ENCODE measurements at regions of chr2 and their contacts with region 1.

Region 1: GRCh38 chr2:32009516-32010256 is 1.1 kb downstream of the MEMO1 start:
- DNase-seq: peak; percentile 50
- H3K4me3 Mint-ChIP-seq: peak overlapping the region; percentile 98
- H3K27ac Mint-ChIP-seq: peak overlapping the region; percentile 92
- H3K4me1 Mint-ChIP-seq: peaks cover 56% of the 10 kb centered on the region
- H3K27me3 Mint-ChIP-seq: no peaks in the 10 kb centered on the region

Region 2: GRCh38 chr2:31980674-31981356 is 28.9 kb before region 1 on chr2:
- CTCF ChIA-PET with region 1: no interaction called
- POLR2A ChIA-PET with region 1: no interaction called
- DNase-seq: no peak
- H3K4me3 Mint-ChIP-seq: no peak overlapping the region
- H3K27ac Mint-ChIP-seq: peak overlapping the region; percentile 26
- H3K4me1 Mint-ChIP-seq: peaks cover 21% of the 10 kb centered on the region
- H3K27me3 Mint-ChIP-seq: no peaks in the 10 kb centered on the region

Region 3: GRCh38 chr2:32427679-32428610 is 418.3 kb after region 1 on chr2:
- CTCF ChIA-PET with region 1: no interaction called
- POLR2A ChIA-PET with region 1: interaction called, 11 read pairs
- DNase-seq: no peak
- H3K4me3 Mint-ChIP-seq: no peak overlapping the region
- H3K27ac Mint-ChIP-seq: no peak overlapping the region
- H3K4me1 Mint-ChIP-seq: peaks cover 22% of the 10 kb centered on the region
- H3K27me3 Mint-ChIP-seq: no peaks in the 10 kb centered on the region

Measured in activated CD4-positive, alpha-beta T cell treated with anti-CD3 and anti-CD28 coated beads, Interleukin-2, amount 10 ng/mL, durations not matched to agents 7 days and 5 days (primary cell).